CD4-positive, alpha-beta memory T cell (primary cell): ENCODE measurements at regions of chr17 and their contacts with region 1.

Region 1: GRCh38 chr17:77372444-77373298 is 231.9 kb downstream of the SEC14L1 start:
- DNase-seq: peak; percentile 61 to 74 (median 68)
- H3K4me3 ChIP-seq: peak overlapping the region; percentile 52 to 95
- H3K4me3 Mint-ChIP-seq: peak overlapping the region; percentile 82 to 100 (median 87)
- H3K27ac ChIP-seq: peak overlapping the region; percentile 68
- H3K27ac Mint-ChIP-seq: peak overlapping the region; percentile 81 to 93 (median 90)
- H3K4me1 ChIP-seq: peaks cover 66% of the 10 kb centered on the region
- H3K4me1 Mint-ChIP-seq: peaks cover 43 to 84% (median 55%) of the 10 kb centered on the region in 4 donors
- H3K27me3 ChIP-seq: no peaks in the 10 kb centered on the region
- H3K27me3 Mint-ChIP-seq: no peaks in the 10 kb centered on the region

Region 2: GRCh38 chr17:77088455-77089123 is 284.1 kb before region 1 on chr17:
- CTCF ChIA-PET with region 1: no interaction called
- POLR2A ChIA-PET with region 1: no interaction called
- intact Hi-C with region 1: no loop called
- DNase-seq: peak; percentile 83 to 92 (median 84)
- H3K4me3 ChIP-seq: peak overlapping the region; percentile 76 to 97
- H3K4me3 Mint-ChIP-seq: peak overlapping the region; percentile 92 to 100 (median 98)
- H3K27ac ChIP-seq: peak overlapping the region; percentile 84
- H3K27ac Mint-ChIP-seq: peak overlapping the region; percentile 98 to 100 (median 99)
- H3K4me1 ChIP-seq: peaks cover 35% of the 10 kb centered on the region
- H3K4me1 Mint-ChIP-seq: peaks cover 24 to 56% (median 40%) of the 10 kb centered on the region in 4 donors
- H3K27me3 ChIP-seq: no peaks in the 10 kb centered on the region
- H3K27me3 Mint-ChIP-seq: peaks cover 0 to 2% of the 10 kb centered on the region in 2 donors

Region 3: GRCh38 chr17:77140879-77141767 is 231.5 kb before region 1 on chr17 and contains the start of gene SEC14L1:
- CTCF ChIA-PET with region 1: no interaction called
- POLR2A ChIA-PET with region 1: no interaction called
- intact Hi-C with region 1: no loop called
- DNase-seq: peak; percentile 9 to 40 (median 24)
- H3K4me3 ChIP-seq: peak within 1 kb of the TSS; percentile 53 to 68
- H3K4me3 Mint-ChIP-seq: peak within 1 kb of the TSS; percentile 87 to 94 (median 90)
- H3K27ac ChIP-seq: peak within 1 kb of the TSS; percentile 75
- H3K27ac Mint-ChIP-seq: peak within 1 kb of the TSS; percentile 90 to 95 (median 95)
- H3K4me1 ChIP-seq: peaks cover 55% of the 10 kb centered on the region
- H3K4me1 Mint-ChIP-seq: peaks cover 32 to 73% (median 55%) of the 10 kb centered on the region in 4 donors
- H3K27me3 ChIP-seq: no peaks in the 10 kb centered on the region
- H3K27me3 Mint-ChIP-seq: no peaks in the 10 kb centered on the region
- total RNA-seq, gene SEC14L1: 35.0 to 35.5 TPM

Region 4: GRCh38 chr17:77182205-77183172 is 190.2 kb before region 1 on chr17:
- CTCF ChIA-PET with region 1: no interaction called
- POLR2A ChIA-PET with region 1: no interaction called
- intact Hi-C with region 1: no loop called
- DNase-seq: peak in 1 of 5 donors; percentile 10
- H3K4me3 ChIP-seq: peak overlapping the region; percentile 7 to 21
- H3K4me3 Mint-ChIP-seq: peak overlapping the region; percentile 48 to 91 (median 77)
- H3K27ac ChIP-seq: peak overlapping the region; percentile 7
- H3K27ac Mint-ChIP-seq: peak overlapping the region in 6 of 7 donors; percentile 92 to 96 (median 94)
- H3K4me1 ChIP-seq: peaks cover 52% of the 10 kb centered on the region
- H3K4me1 Mint-ChIP-seq: peaks cover 11 to 25% (median 18%) of the 10 kb centered on the region in 4 donors
- H3K27me3 ChIP-seq: no peaks in the 10 kb centered on the region
- H3K27me3 Mint-ChIP-seq: no peaks in the 10 kb centered on the region

Region 5: GRCh38 chr17:77322514-77323412 is 49.9 kb before region 1 on chr17:
- CTCF ChIA-PET with region 1: interaction called, 3 read pairs
- POLR2A ChIA-PET with region 1: interaction called, 32 read pairs
- intact Hi-C with region 1: no loop called
- DNase-seq: no peak
- H3K4me3 ChIP-seq: no peak overlapping the region
- H3K4me3 Mint-ChIP-seq: peak overlapping the region in 1 of 8 donors; percentile 13
- H3K27ac ChIP-seq: no peak overlapping the region
- H3K27ac Mint-ChIP-seq: no peak overlapping the region
- H3K4me1 ChIP-seq: peaks cover 69% of the 10 kb centered on the region
- H3K4me1 Mint-ChIP-seq: peaks cover 30 to 68% (median 51%) of the 10 kb centered on the region in 4 donors
- H3K27me3 ChIP-seq: no peaks in the 10 kb centered on the region
- H3K27me3 Mint-ChIP-seq: no peaks in the 10 kb centered on the region

Region 6: DNA sequence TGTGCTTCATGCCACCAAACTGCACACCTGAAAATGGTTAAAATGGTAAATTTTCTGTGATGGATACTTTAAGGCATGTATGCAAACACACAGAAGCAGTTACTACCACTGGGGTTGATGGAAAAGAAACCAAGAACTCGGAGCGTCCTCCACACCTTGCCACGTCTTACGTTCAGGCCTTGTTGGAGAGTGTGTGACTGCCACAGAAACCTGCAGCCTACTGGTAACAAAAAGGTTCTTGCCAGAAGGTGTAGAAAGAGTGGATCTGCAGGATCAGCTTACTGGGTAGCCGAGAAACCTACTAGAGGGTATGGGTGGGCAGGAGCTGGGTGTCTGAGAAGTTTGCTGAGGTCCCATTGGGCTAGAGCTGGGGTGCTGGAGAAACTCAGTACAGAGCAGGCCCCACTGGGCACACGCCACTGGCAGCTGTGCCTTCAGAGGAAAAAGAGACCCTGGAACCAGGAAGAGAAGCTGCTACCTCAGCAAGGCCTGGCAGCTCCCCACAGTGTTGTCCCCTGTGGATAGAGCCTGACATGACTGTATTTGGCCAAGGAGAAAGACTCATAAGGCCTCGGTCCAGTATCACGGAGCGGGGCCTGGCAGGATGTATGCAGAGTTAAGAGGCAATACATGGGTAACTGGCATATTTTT is 27.3 kb before region 1 on chr17:
- CTCF ChIA-PET with region 1: interaction called, 5 read pairs
- POLR2A ChIA-PET with region 1: interaction called, 57 read pairs
- intact Hi-C with region 1: loop called (anchors 1 kb)
- DNase-seq: no peak
- H3K4me3 ChIP-seq: no peak overlapping the region
- H3K4me3 Mint-ChIP-seq: peak overlapping the region in 3 of 8 donors; percentile 30 to 57 (median 35)
- H3K27ac ChIP-seq: no peak overlapping the region
- H3K27ac Mint-ChIP-seq: peak overlapping the region in 6 of 7 donors; percentile 53 to 87 (median 78)
- H3K4me1 ChIP-seq: peaks cover 58% of the 10 kb centered on the region
- H3K4me1 Mint-ChIP-seq: peaks cover 39 to 62% (median 52%) of the 10 kb centered on the region in 4 donors
- H3K27me3 ChIP-seq: no peaks in the 10 kb centered on the region
- H3K27me3 Mint-ChIP-seq: no peaks in the 10 kb centered on the region

Region 7: DNA sequence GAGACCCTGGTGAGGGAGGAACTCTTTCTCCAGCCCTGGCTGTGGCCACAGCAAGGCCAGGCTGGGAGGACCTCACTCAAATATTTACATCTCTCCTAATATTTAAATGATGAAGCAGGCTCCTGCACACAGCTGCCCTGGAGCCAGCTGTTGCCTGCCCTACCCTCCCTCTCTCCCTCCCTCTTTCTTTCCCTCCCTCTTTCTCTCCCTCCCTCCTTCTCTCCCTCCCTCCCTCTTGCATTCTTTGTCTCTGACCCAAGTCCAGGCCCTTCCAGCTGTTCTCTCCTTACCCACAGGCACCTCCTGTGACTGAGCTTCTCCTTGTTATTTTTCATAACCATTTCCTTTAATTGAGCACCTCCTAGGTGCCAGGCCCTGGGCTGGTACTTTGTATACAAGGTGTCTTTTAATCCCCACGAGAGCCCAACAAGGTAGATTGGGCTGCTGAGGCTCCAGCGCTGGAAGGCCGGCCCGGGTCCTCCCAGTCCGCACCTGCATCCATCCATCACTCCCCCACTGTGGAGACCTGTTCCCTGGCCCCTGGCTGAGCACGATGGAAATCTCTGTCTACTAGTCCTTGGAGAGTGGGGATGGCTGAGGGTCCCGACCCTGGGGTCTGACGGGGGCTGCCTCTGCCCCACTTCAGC is 10.4 kb after region 1 on chr17:
- CTCF ChIA-PET with region 1: interaction called, 3 read pairs
- POLR2A ChIA-PET with region 1: interaction called, 261 read pairs
- intact Hi-C with region 1: no loop called
- DNase-seq: no peak
- H3K4me3 ChIP-seq: peak overlapping the region in 1 of 2 donors; percentile 41
- H3K4me3 Mint-ChIP-seq: peak overlapping the region; percentile 74 to 94 (median 82)
- H3K27ac ChIP-seq: peak overlapping the region; percentile 50
- H3K27ac Mint-ChIP-seq: peak overlapping the region; percentile 82 to 95 (median 90)
- H3K4me1 ChIP-seq: peaks cover 98% of the 10 kb centered on the region
- H3K4me1 Mint-ChIP-seq: peaks cover 56 to 97% (median 84%) of the 10 kb centered on the region in 4 donors
- H3K27me3 ChIP-seq: no peaks in the 10 kb centered on the region
- H3K27me3 Mint-ChIP-seq: no peaks in the 10 kb centered on the region

Region 8: GRCh38 chr17:77391668-77392375 is 19.2 kb after region 1 on chr17:
- CTCF ChIA-PET with region 1: interaction called, 46 read pairs
- POLR2A ChIA-PET with region 1: interaction called, 6,031 read pairs
- intact Hi-C with region 1: loop called (anchors 1 kb)
- DNase-seq: peak; percentile 39 to 75 (median 48)
- H3K4me3 ChIP-seq: peak overlapping the region in 1 of 2 donors; percentile 11
- H3K4me3 Mint-ChIP-seq: peak overlapping the region; percentile 57 to 84 (median 67)
- H3K27ac ChIP-seq: peak overlapping the region; percentile 50
- H3K27ac Mint-ChIP-seq: peak overlapping the region; percentile 86 to 95 (median 89)
- H3K4me1 ChIP-seq: peaks cover 95% of the 10 kb centered on the region
- H3K4me1 Mint-ChIP-seq: peaks cover 39 to 91% (median 78%) of the 10 kb centered on the region in 4 donors
- H3K27me3 ChIP-seq: no peaks in the 10 kb centered on the region
- H3K27me3 Mint-ChIP-seq: no peaks in the 10 kb centered on the region

Region 9: DNA sequence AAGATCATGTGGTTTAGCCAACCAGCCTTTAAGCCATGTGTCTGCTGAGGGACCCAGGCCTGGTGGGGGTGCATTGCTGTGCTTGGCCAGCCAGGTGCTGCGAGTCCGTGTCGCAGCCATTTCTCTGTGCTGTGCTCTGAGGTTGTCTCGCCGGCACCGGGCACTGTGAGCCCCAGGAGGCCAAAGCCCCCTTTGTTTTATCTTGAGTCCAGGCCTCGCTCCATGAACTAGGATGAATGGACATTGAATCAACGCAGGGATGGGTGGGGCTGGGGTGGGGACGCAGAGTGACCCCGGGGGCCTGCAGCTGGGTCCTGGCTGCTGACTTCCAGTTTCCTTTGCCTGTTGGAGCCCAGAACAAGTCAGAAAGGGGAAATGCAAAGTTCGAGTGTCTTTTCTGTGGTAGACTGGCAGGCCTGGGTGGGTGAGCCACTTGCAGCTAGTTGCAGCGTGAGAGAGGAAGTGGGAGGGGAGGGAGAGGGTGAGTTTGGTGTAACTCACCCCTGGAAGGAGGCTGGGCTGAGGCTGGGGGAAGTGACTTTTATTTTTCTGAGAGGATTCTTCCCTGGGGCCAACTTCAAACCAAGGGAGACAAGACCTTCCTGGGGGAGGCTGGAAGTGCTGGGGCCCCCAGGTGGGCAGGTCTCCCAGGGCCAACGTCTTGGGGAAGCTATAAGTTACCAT is 92.8 kb after region 1 on chr17:
- CTCF ChIA-PET with region 1: interaction called, 5 read pairs
- POLR2A ChIA-PET with region 1: interaction called, 6,031 read pairs
- intact Hi-C with region 1: no loop called
- DNase-seq: peak; percentile 82 to 94 (median 84)
- H3K4me3 ChIP-seq: peak overlapping the region; percentile 6 to 47
- H3K4me3 Mint-ChIP-seq: peak overlapping the region; percentile 80 to 90 (median 84)
- H3K27ac ChIP-seq: peak overlapping the region; percentile 50
- H3K27ac Mint-ChIP-seq: peak overlapping the region; percentile 83 to 97 (median 85)
- H3K4me1 ChIP-seq: peaks cover 99% of the 10 kb centered on the region
- H3K4me1 Mint-ChIP-seq: peaks cover 60 to 95% (median 79%) of the 10 kb centered on the region in 4 donors
- H3K27me3 ChIP-seq: no peaks in the 10 kb centered on the region
- H3K27me3 Mint-ChIP-seq: no peaks in the 10 kb centered on the region

Region 10: DNA sequence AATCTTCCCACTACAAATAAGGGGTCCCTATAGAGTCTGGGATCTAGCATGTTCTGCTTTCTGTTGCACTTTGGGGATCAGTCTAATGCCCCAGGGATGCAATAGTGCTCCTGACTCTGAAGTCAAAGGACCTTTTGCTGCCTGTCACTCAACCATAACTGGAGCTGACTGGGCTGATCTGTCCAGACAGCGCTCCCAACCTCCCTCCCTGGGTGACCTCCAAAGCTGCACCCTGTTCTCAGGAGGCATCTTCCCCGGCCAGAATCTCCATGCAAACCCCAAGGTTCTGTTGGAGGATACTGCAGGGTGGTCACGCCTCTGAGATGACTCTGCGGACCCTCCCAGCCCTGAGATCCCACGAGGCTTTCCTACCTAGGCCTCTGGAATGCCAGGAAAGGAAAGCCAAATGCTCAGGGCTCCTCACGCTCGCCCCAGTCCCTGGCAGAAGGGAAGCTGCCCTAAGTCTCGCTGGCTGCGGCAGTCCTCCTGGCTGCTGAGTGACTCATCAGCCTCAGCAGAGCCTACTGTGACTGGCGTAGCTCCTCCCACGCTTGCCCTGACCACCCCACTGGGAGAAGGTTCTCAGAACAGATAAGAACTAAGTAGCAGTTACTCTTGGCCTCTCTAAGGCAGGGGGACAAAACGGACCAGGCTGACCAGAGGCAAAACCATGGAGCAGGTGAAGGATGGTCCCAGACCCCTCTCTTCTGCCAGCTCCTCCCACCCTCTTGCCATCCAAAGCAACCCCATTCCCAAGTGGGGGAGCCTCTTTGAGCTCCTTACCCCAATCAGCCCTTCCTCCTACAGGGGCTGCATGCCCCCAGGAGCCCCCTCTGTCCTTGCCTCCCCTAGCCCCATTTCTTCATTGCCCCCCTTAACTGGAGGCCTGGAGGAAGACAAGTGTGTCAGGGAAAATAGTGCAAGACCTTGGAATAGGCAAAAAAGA is 461.8 kb after region 1 on chr17:
- CTCF ChIA-PET with region 1: no interaction called
- POLR2A ChIA-PET with region 1: no interaction called
- intact Hi-C with region 1: no loop called
- DNase-seq: peak in 4 of 5 donors; percentile 19 to 76 (median 22)
- H3K4me3 ChIP-seq: no peak overlapping the region
- H3K4me3 Mint-ChIP-seq: peak overlapping the region in 5 of 8 donors; percentile 21 to 65 (median 39)
- H3K27ac ChIP-seq: no peak overlapping the region
- H3K27ac Mint-ChIP-seq: peak overlapping the region; percentile 3 to 73 (median 43)
- H3K4me1 ChIP-seq: peaks cover 32% of the 10 kb centered on the region
- H3K4me1 Mint-ChIP-seq: peaks cover 24 to 67% (median 39%) of the 10 kb centered on the region in 4 donors
- H3K27me3 ChIP-seq: no peaks in the 10 kb centered on the region
- H3K27me3 Mint-ChIP-seq: no peaks in the 10 kb centered on the region